ENCODE measurements at regions of chr7 and their contacts with region 1.

Region 1: DNA sequence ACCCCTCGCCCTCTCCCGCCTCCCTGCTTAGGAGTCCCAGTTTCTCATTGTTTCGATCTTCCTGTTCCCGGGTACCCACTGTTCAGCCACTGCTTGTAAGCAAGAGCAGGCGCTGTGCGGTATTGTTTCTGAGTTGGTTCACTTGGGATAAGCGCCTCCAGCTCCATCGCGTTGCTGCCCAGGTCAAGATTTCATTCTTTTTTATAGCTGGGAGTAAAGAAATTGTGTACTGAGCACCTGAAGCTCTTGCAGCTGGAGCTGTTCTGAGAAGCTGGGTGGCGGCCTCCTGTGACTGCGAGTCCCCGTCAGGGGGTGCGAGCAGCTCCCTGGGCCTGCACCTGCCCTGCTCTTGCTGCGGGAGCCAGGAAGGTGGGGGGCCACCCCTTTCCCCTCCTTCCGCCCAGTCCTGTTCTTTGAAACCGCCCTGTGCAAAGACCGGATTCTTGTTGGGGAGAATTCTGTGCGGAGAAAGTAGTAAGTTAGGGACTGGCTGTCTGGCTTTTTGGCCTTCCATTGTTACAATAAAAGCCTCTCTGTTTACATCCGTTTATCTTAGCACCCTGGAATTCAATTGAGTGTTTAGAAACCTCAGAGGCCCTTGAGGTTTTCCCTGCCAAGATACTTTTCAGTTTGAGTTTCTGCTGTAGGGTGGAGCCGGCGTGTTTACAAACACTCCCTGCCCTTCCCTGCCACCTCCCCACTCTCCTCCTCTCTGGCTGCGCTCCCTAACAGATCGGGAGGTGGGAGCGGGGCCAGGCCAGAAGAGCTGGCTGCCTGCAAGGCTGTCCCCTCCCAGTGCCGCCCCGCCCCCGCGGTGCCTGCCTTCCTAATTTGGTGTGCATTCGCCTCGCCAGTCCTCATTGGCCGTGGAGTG is 30.8 kb upstream of the AP5Z1 start:
- DNase-seq: peak; percentile 99
- ATAC-seq: peak; percentile 98
- H3K4me3 ChIP-seq: no peak overlapping the region
- H3K27ac ChIP-seq: peak overlapping the region; percentile 90
- H3K4me1 ChIP-seq: peaks cover 12% of the 10 kb centered on the region
- H3K27me3 ChIP-seq: no peaks in the 10 kb centered on the region
- CTCF ChIP-seq: no peak
- POLR2A ChIP-seq: no peak; the same call in 1 of the 2 replicates
- RAD21 ChIP-seq: peak; percentile 9; the same call in 1 of the 2 replicates

Region 2: DNA sequence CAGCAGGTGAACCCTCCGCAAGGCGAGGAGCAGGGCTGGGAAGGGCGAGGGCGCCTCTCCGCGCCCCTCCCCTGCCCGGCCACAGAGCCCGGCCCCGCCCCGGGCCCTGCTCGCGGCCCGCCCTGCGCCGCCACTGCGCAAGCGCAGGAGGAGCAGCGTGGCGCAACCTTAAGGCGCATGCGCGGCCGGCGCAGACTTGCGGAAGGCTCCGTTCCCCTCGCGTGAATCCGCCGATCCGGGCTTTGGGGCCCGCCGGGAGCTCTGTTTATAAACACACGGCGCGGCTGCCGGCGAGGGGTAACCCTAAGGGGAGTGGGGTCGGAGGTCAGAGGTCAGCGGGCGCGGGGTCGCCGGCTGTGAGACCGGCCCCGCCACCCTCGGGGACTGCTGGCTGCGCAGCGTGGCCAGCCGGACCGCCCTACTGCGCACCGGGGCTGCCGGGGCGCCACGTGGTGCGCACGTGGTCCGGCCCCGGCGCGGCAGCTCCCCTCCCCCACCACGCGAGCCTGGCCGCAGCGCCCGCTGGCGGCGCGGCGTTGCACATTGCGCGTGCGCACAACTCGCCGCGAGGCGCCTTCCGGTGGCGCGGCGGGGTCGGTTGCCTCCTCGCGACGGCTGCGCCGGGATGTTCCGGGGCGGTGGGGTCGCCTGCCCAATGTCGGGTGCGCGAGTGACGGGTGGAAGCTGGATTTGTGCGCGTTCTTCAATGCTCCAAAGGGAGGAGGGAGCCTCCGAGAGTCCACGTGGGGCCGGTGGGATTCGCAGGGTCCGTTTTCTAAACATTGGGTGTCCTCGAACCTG is 102.8 kb before region 1 on chr7:
- CTCF ChIA-PET with region 1: interaction called, 3 read pairs
- POLR2A ChIA-PET with region 1: interaction called, 5 read pairs
- dilution Hi-C with region 1: no loop called
- in situ Hi-C with region 1: no loop called
- intact Hi-C with region 1: loop called (anchors 1 kb)
- DNase-seq: peak; percentile 89
- ATAC-seq: peak; percentile 95
- H3K4me3 ChIP-seq: peak overlapping the region; percentile 74
- H3K27ac ChIP-seq: peak overlapping the region; percentile 97
- H3K4me1 ChIP-seq: 0 out of 2 replicates have a peak, but pooled peaks cover 2% of the 10 kb centered on the region
- H3K27me3 ChIP-seq: no peaks in the 10 kb centered on the region
- CTCF ChIP-seq: peak; percentile 72
- POLR2A ChIP-seq: peak; percentile 72; the same call in 1 of the 2 replicates
- RAD21 ChIP-seq: peak; percentile 44

Region 3: DNA sequence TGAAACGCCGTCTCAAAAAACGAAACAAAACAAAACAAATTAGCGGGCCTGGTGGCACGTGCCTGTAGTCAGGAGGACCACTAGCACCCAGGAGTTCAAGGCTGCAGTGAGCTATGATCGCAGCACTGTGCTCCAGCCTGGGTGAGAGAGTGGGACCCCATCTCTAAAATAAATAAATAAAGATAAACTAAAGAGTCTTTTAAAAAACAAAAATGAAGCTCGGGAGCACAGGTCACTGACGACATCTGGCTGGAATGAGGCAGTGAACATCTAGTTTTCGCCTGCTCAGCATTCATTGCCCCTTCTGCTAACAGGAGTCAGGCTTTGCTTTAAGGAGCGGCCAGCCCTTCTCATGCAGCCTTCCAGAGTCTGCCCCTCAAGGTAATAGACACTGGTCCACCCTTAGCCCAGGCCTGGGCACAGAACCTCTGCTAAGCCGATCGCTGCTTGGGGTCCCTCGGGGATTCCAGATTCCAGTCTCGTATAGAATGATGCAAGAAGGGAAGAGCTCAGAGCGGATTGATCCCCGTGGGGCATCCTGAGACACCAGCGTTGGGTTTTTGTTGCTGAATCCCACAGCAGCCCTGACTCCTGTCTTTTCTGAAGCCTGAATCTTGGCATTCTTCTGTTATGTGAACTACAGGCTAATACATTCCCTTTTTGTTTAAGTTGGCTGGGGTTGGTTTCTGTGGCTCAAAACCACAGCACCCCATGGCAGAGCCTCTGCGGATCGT is 76.7 kb before region 1 on chr7:
- CTCF ChIA-PET with region 1: no interaction called
- POLR2A ChIA-PET with region 1: interaction called, 3 read pairs
- dilution Hi-C with region 1: no loop called
- in situ Hi-C with region 1: no loop called
- intact Hi-C with region 1: loop called (anchors 1 kb)
- DNase-seq: peak; percentile 90
- ATAC-seq: peak; percentile 71
- H3K4me3 ChIP-seq: no peak overlapping the region
- H3K27ac ChIP-seq: peak overlapping the region; percentile 90
- H3K4me1 ChIP-seq: peaks cover 7% of the 10 kb centered on the region
- H3K27me3 ChIP-seq: no peaks in the 10 kb centered on the region
- CTCF ChIP-seq: no peak
- POLR2A ChIP-seq: no peak
- RAD21 ChIP-seq: no peak

Region 4: GRCh38 chr7:4681886-4682620 is 62.6 kb before region 1 on chr7 and contains the start of gene FOXK1:
- CTCF ChIA-PET with region 1: no interaction called
- POLR2A ChIA-PET with region 1: interaction called, 7 read pairs
- dilution Hi-C with region 1: no loop called
- in situ Hi-C with region 1: no loop called
- intact Hi-C with region 1: loop called (anchors 2 kb)
- DNase-seq: peak; percentile 65
- ATAC-seq: peak; percentile 88
- H3K4me3 ChIP-seq: peak within 1 kb of the TSS; percentile 91
- H3K27ac ChIP-seq: peak within 1 kb of the TSS; percentile 100
- H3K4me1 ChIP-seq: peaks cover 9% of the 10 kb centered on the region
- H3K27me3 ChIP-seq: no peaks in the 10 kb centered on the region
- CTCF ChIP-seq: 0 out of 2 replicates have a peak, but pooled peaks have one; percentile 11
- POLR2A ChIP-seq: peak; percentile 52; the same call in 1 of the 2 replicates
- RAD21 ChIP-seq: peak; percentile 20; the same call in 1 of the 2 replicates
- total RNA-seq, gene FOXK1: 4.3 and 5.0 TPM in 2 replicates

Region 5: DNA sequence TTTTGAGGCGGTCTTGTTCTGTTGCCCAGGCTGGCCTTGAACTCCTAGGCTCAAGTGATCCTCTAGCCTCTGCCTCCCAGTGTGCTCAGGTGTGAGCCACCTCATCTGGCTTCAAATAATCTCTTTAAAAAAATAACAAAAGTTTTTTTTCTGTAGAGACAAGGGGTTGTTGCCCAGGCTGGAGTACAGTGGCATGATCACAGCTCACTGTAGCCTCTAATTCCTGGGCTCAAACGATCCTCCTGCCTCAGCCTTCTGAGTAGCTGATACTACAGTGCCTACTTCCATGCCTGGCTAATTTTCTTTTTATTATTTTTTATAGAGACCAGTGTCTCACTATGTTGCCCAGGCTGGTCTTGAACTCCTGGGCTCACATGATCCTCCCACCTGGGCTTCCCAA is 50.9 kb before region 1 on chr7:
- CTCF ChIA-PET with region 1: no interaction called
- POLR2A ChIA-PET with region 1: no interaction called
- dilution Hi-C with region 1: no loop called
- in situ Hi-C with region 1: no loop called
- intact Hi-C with region 1: loop called (anchors 2 kb)
- DNase-seq: no peak
- ATAC-seq: no peak
- H3K4me3 ChIP-seq: no peak overlapping the region
- H3K27ac ChIP-seq: peak overlapping the region; percentile 50; the same call in 1 of the 2 replicates
- H3K4me1 ChIP-seq: peaks cover 17% of the 10 kb centered on the region
- H3K27me3 ChIP-seq: no peaks in the 10 kb centered on the region
- CTCF ChIP-seq: no peak
- POLR2A ChIP-seq: no peak
- RAD21 ChIP-seq: no peak

Region 6: DNA sequence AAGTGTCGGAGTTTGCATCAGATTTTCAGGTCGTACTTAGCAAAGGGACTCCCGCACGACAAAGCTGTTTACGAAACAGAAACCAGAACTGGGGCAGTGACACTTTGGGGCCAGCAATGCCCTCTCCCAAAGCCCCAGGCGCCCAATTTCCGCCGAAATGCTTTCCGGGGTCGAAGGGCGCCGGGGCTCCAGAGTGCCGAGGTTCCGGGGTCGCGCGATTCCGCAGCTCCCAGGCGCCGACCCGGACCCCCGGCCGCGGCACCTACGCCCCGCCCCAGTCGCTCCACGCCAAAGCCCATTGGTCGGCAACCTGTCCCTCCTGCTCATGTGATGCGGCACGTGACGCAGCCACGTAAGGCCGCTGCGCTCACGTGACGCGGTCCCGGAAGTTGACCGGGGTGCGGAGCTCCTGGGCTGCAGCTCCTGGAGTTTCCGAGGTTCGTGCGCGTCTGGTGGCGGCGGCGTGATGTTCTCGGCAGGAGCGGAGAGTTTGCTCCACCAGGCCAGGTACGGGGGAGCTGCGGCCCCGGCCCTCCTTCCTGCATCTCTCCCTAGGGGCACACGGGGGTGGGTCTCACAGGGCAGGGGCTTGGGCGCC is 30.7 kb after region 1 on chr7 and contains the start of gene AP5Z1:
- CTCF ChIA-PET with region 1: no interaction called
- POLR2A ChIA-PET with region 1: interaction called, 17 read pairs
- dilution Hi-C with region 1: no loop called
- in situ Hi-C with region 1: no loop called
- intact Hi-C with region 1: loop called (anchors 1 kb)
- DNase-seq: peak; percentile 96
- ATAC-seq: peak; percentile 94
- H3K4me3 ChIP-seq: peak within 1 kb of the TSS; percentile 83
- H3K27ac ChIP-seq: peak within 1 kb of the TSS; percentile 69
- H3K4me1 ChIP-seq: peaks cover 4% of the 10 kb centered on the region; the same call in 1 of the 2 replicates
- H3K27me3 ChIP-seq: no peaks in the 10 kb centered on the region
- CTCF ChIP-seq: no peak
- POLR2A ChIP-seq: peak; percentile 87
- RAD21 ChIP-seq: peak; percentile 1; the same call in 1 of the 2 replicates
- total RNA-seq, gene AP5Z1: 9.2 and 9.7 TPM in 2 replicates